Transverse colon (tissue), 4 donors: ENCODE measurements at regions of chr4 and their contacts with region 1.

Region 1: GRCh38 chr4:27318743-27319142 is 458.1 kb downstream of the STIM2 start:
- DNase-seq: peak; percentile 47
- H3K4me3 ChIP-seq: no peak overlapping the region
- H3K27ac ChIP-seq: no peak overlapping the region
- H3K4me1 ChIP-seq: peaks cover 0 to 33% (median 16%) of the 10 kb centered on the region in 4 donors
- H3K27me3 ChIP-seq: no peaks in the 10 kb centered on the region
- CTCF ChIP-seq: peak; percentile 15 to 46 (median 39)
- EP300 ChIP-seq: no peak
- POLR2A ChIP-seq: no peak

Region 2: DNA sequence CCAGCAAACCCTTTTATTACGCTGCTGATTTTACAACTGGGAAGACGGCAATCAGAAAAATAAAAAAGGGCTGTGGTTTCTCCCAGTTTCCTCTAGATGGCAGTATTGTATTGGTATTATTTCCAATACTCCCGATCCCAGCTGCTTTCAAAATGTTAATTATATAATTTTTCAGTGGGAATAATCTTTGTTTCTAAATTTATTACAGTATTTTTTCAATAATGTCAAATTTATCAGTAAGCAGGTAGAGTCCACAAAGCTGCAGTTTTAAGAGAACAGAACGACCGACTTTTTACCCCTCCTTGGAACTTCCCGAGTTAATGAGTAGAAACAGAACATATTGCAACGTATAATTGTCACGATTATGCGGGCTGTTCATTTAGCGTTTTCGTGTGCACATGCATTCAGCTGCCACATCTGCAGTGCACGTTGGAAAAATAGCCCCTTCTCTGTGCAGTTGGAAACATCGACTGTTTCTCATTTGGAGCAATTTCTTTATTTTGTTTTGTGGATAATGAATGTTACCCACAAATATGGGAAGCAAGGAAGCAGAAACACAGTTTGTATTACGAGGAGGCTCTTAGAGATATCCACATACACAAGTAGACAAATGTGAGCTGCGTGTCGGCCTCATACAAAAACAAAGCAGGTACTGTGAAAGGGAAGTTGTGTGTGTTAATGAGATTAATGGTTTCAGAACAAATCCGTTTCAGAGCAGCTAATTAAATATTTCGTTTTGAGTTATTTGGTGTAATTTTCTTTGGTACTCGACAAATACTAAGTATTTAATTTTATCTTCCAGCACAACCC is 270.1 kb before region 1 on chr4:
- in situ Hi-C with region 1: loop called in 2 of 4 experiments (anchors 25 kb)
- intact Hi-C with region 1: no loop called
- DNase-seq: no peak
- H3K4me3 ChIP-seq: peak overlapping the region in 3 of 4 donors; percentile 10 to 45 (median 12)
- H3K27ac ChIP-seq: no peak overlapping the region
- H3K4me1 ChIP-seq: peaks cover 0 to 9% (median 2%) of the 10 kb centered on the region in 4 donors
- H3K27me3 ChIP-seq: peaks cover 16% of the 10 kb centered on the region
- CTCF ChIP-seq: peak; percentile 79 to 90 (median 80)
- EP300 ChIP-seq: no peak
- POLR2A ChIP-seq: no peak

Region 3: GRCh38 chr4:27066601-27067000 is 252.1 kb before region 1 on chr4:
- in situ Hi-C with region 1: loop called in 1 of 4 experiments (anchors 25 kb)
- intact Hi-C with region 1: no loop called
- DNase-seq: peak; percentile 26
- H3K4me3 ChIP-seq: no peak overlapping the region
- H3K27ac ChIP-seq: no peak overlapping the region
- H3K4me1 ChIP-seq: no peaks in the 10 kb centered on the region
- H3K27me3 ChIP-seq: peaks cover under 1% of the 10 kb centered on the region
- CTCF ChIP-seq: no peak
- EP300 ChIP-seq: no peak
- POLR2A ChIP-seq: no peak

Region 4: DNA sequence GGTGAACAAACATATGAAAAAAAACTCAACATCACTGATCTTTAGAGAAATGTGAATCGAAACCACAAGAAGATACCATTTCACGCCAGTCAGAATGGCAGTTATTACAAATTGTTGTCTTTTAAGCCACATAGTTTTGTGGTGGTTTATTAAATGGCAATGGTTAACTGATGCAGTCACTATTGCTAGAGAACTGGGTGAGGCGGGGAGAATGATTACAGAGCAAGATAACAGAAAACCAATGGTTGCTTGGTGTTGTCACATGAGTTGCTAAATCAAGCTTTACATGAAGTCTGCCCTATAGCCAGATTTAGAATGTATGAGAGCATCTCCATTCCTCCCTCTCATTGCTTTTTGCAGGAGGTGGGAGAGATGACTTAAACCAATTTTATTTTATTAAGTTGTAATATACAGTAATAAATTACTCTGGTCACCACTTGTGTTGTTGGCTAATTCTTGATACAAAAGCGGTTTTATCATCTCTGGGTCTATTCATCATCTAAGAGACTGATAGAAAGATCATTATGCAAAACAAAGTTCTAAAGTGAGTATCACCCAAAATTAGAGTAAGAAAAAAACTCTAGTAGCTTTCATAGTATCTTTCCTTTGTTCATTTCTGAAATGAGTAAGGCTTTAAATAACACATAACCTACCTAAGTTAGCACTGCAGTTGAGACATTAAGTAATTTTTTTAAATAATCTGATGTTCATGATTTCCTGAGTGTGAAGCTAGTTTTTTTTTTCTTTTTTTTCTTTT is 401.4 kb after region 1 on chr4:
- in situ Hi-C with region 1: no loop called
- intact Hi-C with region 1: no loop called
- DNase-seq: no peak
- H3K4me3 ChIP-seq: no peak overlapping the region
- H3K27ac ChIP-seq: no peak overlapping the region
- H3K4me1 ChIP-seq: no peaks in the 10 kb centered on the region
- H3K27me3 ChIP-seq: no peaks in the 10 kb centered on the region
- CTCF ChIP-seq: no peak
- EP300 ChIP-seq: no peak
- POLR2A ChIP-seq: no peak